ENCODE measurements at regions of chr10 and their contacts with region 1.

Region 1: DNA sequence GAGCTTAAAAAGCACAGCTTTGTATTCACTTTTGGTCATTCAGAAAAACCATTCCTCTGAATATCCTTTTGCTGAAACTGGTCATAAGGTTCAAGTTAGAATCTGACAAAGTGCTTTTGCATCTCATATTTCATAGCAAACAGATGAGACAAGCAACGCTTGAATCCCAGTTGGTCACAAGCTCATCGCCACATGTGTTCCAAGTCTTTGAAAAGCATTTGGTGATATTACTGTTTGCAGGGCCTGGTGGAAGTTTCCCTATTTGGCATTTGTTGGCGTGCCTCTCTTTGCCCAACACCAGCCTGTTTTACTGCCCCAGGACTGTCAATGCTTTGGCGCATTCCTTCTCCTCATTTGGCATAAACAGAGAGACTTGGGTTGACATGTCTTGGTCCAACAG is 10.4 kb downstream of the TACC2 start:
- DNase-seq: no peak
- ATAC-seq: peak; percentile 11

Region 2: DNA sequence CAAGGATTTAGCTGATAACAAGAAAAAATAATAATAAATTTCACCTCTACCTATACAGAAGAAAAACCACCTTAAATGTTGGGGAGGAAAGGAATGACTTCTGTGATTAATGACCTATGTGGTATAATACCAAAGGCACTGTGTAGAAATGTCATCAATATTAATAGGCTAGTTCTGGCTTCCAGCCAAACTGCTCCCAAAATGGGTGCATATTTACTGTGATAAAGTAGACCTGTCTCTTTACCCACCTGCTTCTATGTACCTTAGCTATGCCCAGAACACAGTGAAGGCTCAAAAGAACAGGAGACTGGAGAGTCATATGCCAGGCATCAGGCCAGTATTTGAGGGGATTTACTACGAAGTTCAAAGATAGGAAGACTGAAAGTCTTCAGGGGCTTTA is 147.5 kb before region 1 on chr10:
- intact Hi-C with region 1: no loop called
- DNase-seq: no peak
- ATAC-seq: no peak

Region 3: DNA sequence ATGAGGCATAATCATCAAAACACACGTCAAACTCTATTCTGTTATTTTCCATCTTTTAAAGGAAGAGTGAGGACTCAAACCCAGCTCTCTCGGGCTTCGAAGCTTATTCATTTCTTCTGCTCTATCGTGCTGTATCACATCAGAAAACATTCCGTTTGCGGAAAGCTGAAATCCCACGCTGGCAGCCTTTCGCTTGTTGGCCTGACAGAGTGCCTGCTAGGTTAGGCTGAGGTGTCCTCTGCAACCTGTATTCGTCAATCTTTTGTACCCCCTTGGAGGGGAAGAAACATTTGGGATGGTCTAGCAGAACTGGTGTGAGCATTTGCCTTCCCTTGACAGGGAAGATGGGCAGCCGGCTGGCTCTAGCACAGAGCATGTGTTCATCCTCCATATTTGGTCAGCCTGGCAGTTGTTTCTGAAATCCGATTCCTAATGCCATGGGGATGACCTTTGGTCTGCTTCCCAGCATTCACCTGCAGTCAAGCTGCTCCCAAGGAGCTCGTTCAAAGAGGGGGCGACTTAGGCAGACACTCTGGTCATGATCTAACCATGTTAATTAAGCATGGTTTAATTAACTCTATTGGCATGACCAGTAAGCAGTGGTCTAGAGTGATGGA is 44.8 kb after region 1 on chr10:
- intact Hi-C with region 1: loop called (anchors 5 kb)
- DNase-seq: no peak
- ATAC-seq: peak; percentile 74